ENCODE measurements at regions of chr1 and their contacts with region 1.

Region 1: GRCh38 chr1:23303524-23303923 is 40.6 kb downstream of the HNRNPR start:
- DNase-seq: no peak
- ATAC-seq: no peak
- H3K4me3 ChIP-seq: no peak overlapping the region
- H3K27ac ChIP-seq: no peak overlapping the region
- H3K4me1 ChIP-seq: no peaks in the 10 kb centered on the region
- H3K27me3 ChIP-seq: no peaks in the 10 kb centered on the region
- CTCF ChIP-seq: no peak
- EP300 ChIP-seq: no peak
- POLR2A ChIP-seq: no peak
- RAD21 ChIP-seq: no peak

Region 2: DNA sequence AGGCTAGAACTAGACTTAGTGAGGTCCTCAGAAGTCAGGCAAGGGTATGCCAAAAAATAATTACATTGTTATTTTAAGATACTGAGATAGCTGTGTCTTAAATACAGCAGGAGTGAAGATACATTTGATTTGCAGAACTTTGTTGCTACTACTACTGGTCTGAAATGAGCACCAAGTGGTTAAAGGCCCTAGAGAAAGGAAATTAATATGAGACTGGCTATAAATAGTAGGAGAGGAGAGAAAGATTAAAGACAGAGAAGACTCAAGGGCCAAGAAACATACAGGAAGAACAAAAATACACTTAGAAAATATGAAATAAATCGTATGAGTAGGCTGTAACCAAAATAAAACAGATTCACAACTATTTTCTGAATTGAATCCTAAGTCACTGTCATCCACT is 19.2 kb after region 1 on chr1:
- CTCF ChIA-PET with region 1: interaction called, 3 read pairs
- POLR2A ChIA-PET with region 1: interaction called, 5 read pairs
- RAD21 ChIA-PET with region 1: no interaction called
- SMC1A ChIA-PET with region 1: interaction called, 10 read pairs
- in situ Hi-C with region 1: no loop called
- intact Hi-C with region 1: no loop called
- DNase-seq: no peak
- ATAC-seq: no peak
- H3K4me3 ChIP-seq: no peak overlapping the region
- H3K27ac ChIP-seq: no peak overlapping the region
- H3K4me1 ChIP-seq: no peaks in the 10 kb centered on the region
- H3K27me3 ChIP-seq: no peaks in the 10 kb centered on the region
- CTCF ChIP-seq: no peak
- EP300 ChIP-seq: no peak
- POLR2A ChIP-seq: no peak
- RAD21 ChIP-seq: no peak